Common myeloid progenitor, CD34-positive (primary cell): ENCODE measurements at regions of chr7 and their contacts with region 1.

Region 1: DNA sequence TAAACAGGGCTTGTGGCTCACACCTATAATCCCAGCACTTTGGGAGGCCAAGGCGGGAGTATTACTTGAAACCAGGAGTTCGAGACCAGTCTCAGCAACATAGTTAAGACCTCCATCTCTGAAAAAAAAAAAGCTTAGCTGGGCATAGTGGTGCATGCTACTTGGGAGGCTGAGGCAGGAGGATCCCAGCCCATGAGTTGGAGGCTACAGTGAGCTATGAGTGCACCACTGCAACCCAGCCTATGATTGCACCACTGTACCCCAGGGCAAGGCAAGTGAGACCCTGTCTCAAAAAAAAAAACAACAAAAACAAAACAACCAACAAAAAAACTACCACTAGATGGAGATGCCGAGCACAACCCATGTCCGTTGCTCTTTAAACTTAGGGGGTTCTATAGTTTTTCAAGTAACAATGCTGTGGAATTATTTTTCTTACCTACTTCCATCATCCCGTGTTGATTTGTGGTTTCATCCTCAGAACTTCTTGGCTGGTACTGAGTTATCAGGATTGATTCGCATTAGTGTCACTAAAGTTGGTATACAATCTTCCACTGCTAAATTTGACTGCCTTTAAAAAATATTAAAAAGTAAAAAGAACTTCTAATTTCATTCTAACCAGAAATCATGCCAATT is 12.2 kb upstream of the REPIN1 start:
- DNase-seq: peak; percentile 73 to 82 (median 75)
- H3K4me3 ChIP-seq: peak overlapping the region in 1 of 7 experiments; percentile 24
- H3K27ac ChIP-seq: no peak overlapping the region
- H3K4me1 ChIP-seq: peaks cover 15 to 50% (median 38%) of the 10 kb centered on the region in 4 experiments
- H3K27me3 ChIP-seq: no peaks in the 10 kb centered on the region

Region 2: GRCh38 chr7:150341256-150342120 is 14.9 kb before region 1 on chr7 and contains the start of gene RARRES2:
- CTCF ChIA-PET with region 1: interaction called, 30 read pairs
- POLR2A ChIA-PET with region 1: interaction called, 3 read pairs
- DNase-seq: peak in 1 of 3 donors; percentile 33
- H3K4me3 ChIP-seq: peak within 1 kb of the TSS in 5 of 7 experiments; percentile 23 to 64 (median 55)
- H3K27ac ChIP-seq: no peak within 1 kb of the TSS
- H3K4me1 ChIP-seq: peaks cover 2 to 30% (median 19%) of the 10 kb centered on the region in 4 experiments
- H3K27me3 ChIP-seq: peaks cover 0 to 23% (median 3%) of the 10 kb centered on the region in 5 experiments

Region 3: DNA sequence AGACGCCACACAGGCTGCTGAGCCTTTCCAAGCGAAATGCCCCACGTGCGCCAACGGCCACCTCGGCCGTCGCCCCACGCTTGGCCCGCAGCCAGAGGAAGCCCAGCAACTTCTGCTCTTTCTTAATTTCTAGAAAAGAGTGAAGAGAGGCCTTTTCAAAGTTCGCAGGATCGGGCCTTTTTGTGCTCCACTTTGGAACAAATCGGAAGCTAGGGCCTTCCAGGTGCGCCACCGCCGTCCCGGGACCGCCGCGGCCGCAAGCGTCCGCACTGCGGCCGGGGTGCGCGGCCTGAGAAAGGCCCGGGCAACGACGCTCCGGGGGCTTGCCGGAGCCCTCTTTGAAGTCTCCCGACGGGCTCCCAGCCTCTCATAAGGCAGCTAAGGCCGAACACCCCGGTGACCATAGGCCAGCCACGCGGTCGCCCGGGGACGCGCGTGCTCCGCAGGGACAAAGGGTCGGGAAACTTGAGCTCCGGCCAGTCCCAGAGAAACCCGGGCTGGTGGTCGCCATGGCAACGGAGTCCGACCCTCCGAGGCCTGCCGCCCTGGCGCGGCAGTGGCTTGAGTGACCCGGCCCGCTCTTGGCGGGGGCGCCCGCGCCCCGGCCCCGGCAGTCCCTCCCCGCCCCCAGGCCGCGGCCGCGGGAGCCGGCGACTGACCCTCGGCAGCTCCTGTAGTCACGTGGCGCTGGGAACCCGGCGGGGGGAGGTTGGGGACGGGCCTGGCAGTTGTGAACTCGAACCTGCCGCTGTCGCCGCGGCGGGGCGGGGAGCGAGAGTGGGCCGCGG is 11.9 kb after region 1 on chr7 and contains the start of gene REPIN1:
- CTCF ChIA-PET with region 1: interaction called, 27 read pairs
- POLR2A ChIA-PET with region 1: interaction called, 11 read pairs
- DNase-seq: peak; percentile 90 to 97 (median 96)
- H3K4me3 ChIP-seq: peak within 1 kb of the TSS; percentile 57 to 96 (median 83)
- H3K27ac ChIP-seq: peak within 1 kb of the TSS; percentile 96 to 97
- H3K4me1 ChIP-seq: peaks cover 39 to 78% (median 76%) of the 10 kb centered on the region in 4 experiments
- H3K27me3 ChIP-seq: no peaks in the 10 kb centered on the region

Region 4: GRCh38 chr7:150378853-150379440 is 22.6 kb after region 1 on chr7 and contains the start of gene ZNF775:
- CTCF ChIA-PET with region 1: interaction called, 27 read pairs
- POLR2A ChIA-PET with region 1: interaction called, 4 read pairs
- DNase-seq: peak; percentile 92 to 95 (median 94)
- H3K4me3 ChIP-seq: peak within 1 kb of the TSS; percentile 73 to 90 (median 84)
- H3K27ac ChIP-seq: peak within 1 kb of the TSS; percentile 50 to 90
- H3K4me1 ChIP-seq: peaks cover 11 to 54% (median 31%) of the 10 kb centered on the region in 4 experiments
- H3K27me3 ChIP-seq: no peaks in the 10 kb centered on the region

Region 5: GRCh38 chr7:150404805-150405583 is 48.6 kb after region 1 on chr7:
- CTCF ChIA-PET with region 1: interaction called, 10 read pairs
- POLR2A ChIA-PET with region 1: no interaction called
- DNase-seq: peak; percentile 89 to 94 (median 91)
- H3K4me3 ChIP-seq: peak overlapping the region; percentile 65 to 90 (median 79)
- H3K27ac ChIP-seq: peak overlapping the region; percentile 64 to 95
- H3K4me1 ChIP-seq: peaks cover 0 to 33% (median 31%) of the 10 kb centered on the region in 4 experiments
- H3K27me3 ChIP-seq: no peaks in the 10 kb centered on the region

Region 6: GRCh38 chr7:150420987-150421674 is 64.8 kb after region 1 on chr7:
- CTCF ChIA-PET with region 1: interaction called, 18 read pairs
- POLR2A ChIA-PET with region 1: no interaction called
- DNase-seq: peak; percentile 76 to 86 (median 85)
- H3K4me3 ChIP-seq: no peak overlapping the region
- H3K27ac ChIP-seq: no peak overlapping the region
- H3K4me1 ChIP-seq: peaks cover 0 to 2% (median 0%) of the 10 kb centered on the region in 4 experiments
- H3K27me3 ChIP-seq: peaks cover 0 to 1% (median 0%) of the 10 kb centered on the region in 5 experiments

Region 7: GRCh38 chr7:150476819-150477631 is 120.6 kb after region 1 on chr7:
- CTCF ChIA-PET with region 1: no interaction called
- POLR2A ChIA-PET with region 1: no interaction called
- DNase-seq: no peak
- H3K4me3 ChIP-seq: no peak overlapping the region
- H3K27ac ChIP-seq: no peak overlapping the region
- H3K4me1 ChIP-seq: peaks cover 11 to 24% (median 14%) of the 10 kb centered on the region in 4 experiments
- H3K27me3 ChIP-seq: no peaks in the 10 kb centered on the region